Activated CD8-positive, alpha-beta T cell treated with anti-CD3 and anti-CD28 coated beads, Interleukin-2, amount 10 ng/mL, durations not matched to agents 7 days and 5 days (primary cell): ENCODE measurements at regions of chr6 and their contacts with region 1.

Region 1: GRCh38 chr6:30914076-30914853 is at the start of gene VARS2:
- DNase-seq: peak; percentile 87
- ATAC-seq: peak; percentile 97
- H3K4me3 Mint-ChIP-seq: peak within 1 kb of the TSS; percentile 86
- H3K27ac Mint-ChIP-seq: peak within 1 kb of the TSS; percentile 89
- H3K4me1 Mint-ChIP-seq: peaks cover 29% of the 10 kb centered on the region
- H3K27me3 Mint-ChIP-seq: no peaks in the 10 kb centered on the region
- total RNA-seq, gene VARS2: 38.4 to 38.8 TPM

Region 2: GRCh38 chr6:30821862-30822782 is 92.1 kb before region 1 on chr6:
- CTCF ChIA-PET with region 1: interaction called, 69 read pairs
- POLR2A ChIA-PET with region 1: no interaction called
- DNase-seq: no peak
- ATAC-seq: no peak
- H3K4me3 Mint-ChIP-seq: no peak overlapping the region
- H3K27ac Mint-ChIP-seq: peak overlapping the region; percentile 39
- H3K4me1 Mint-ChIP-seq: peaks cover 60% of the 10 kb centered on the region
- H3K27me3 Mint-ChIP-seq: no peaks in the 10 kb centered on the region

Region 3: DNA sequence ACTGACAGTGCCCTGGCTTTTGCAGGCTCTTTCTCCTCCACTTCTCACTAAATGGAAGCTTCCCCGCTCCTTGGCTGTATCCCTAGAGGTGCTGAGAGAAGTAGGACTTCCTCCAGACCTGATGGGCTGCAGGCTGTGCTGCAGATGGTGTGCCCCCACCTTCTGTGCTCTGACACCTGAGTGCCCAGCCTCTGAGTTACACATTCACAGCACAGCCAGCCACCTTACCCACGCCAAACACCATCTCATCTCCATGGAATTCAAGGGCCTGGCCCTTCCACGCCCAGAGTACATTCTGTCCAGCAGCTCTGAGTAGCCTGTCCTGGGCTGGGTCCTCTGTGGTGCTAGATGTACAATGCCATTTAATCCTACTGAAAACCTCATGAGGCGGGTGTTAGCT is 12.4 kb after region 1 on chr6:
- CTCF ChIA-PET with region 1: interaction called, 11 read pairs
- POLR2A ChIA-PET with region 1: no interaction called
- DNase-seq: no peak
- ATAC-seq: no peak
- H3K4me3 Mint-ChIP-seq: no peak overlapping the region
- H3K27ac Mint-ChIP-seq: no peak overlapping the region
- H3K4me1 Mint-ChIP-seq: no peaks in the 10 kb centered on the region
- H3K27me3 Mint-ChIP-seq: no peaks in the 10 kb centered on the region

Region 4: DNA sequence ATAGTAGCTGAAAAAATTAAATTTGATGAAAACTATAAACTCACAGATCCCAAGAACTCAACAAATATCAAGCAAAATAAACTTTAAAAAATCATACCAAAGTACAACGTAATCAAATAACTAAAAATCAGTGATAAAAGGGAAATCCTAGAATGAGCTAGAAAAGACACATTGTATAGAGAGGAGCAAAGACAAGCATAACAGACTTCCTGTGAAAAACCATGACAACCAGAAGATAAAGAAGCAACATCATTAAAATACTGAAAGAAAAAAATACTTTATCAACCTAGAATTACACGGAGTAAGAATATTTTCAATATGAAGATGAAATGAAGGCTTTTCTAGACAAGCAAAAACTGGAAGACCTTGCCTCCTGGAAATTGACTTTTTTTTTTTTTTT is 105.8 kb after region 1 on chr6:
- CTCF ChIA-PET with region 1: no interaction called
- POLR2A ChIA-PET with region 1: no interaction called
- DNase-seq: no peak
- ATAC-seq: no peak
- H3K4me3 Mint-ChIP-seq: no peak overlapping the region
- H3K27ac Mint-ChIP-seq: no peak overlapping the region
- H3K4me1 Mint-ChIP-seq: no peaks in the 10 kb centered on the region
- H3K27me3 Mint-ChIP-seq: peaks cover 14% of the 10 kb centered on the region

Region 5: GRCh38 chr6:31068669-31069340 is 154.5 kb after region 1 on chr6:
- CTCF ChIA-PET with region 1: interaction called, 56 read pairs
- POLR2A ChIA-PET with region 1: no interaction called
- DNase-seq: peak; percentile 68
- ATAC-seq: peak; percentile 94
- H3K4me3 Mint-ChIP-seq: no peak overlapping the region
- H3K27ac Mint-ChIP-seq: no peak overlapping the region
- H3K4me1 Mint-ChIP-seq: no peaks in the 10 kb centered on the region
- H3K27me3 Mint-ChIP-seq: peaks cover 9% of the 10 kb centered on the region

Region 6: DNA sequence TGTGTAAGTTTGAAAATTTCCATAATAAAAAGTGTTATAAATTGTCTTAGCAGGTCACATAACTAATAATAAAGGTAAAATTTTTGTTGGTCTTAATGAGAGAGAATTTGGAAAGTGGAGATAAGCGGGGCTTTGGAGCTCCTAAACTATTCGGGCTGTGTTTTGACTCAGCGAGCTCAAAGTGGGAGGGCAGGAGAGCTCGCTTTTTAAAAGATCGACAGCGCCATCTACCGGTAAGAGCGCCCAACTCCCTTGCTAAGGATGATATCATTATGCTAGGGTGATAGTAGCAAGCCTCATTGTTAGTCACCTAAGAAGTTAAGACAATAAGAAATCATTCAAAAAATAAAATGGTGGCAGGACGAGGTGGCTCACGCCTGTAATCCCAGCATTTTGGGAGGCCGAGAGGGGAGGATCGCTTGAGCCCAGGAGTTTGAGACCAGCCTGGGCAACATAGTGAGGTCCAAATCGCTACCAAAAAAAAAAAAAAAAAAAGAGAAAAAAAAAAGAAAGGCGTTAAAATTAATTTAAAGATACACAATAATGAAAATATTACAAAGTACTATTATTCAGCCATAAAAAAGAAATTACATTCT is 173.3 kb after region 1 on chr6:
- CTCF ChIA-PET with region 1: interaction called, 97 read pairs
- POLR2A ChIA-PET with region 1: no interaction called
- DNase-seq: peak; percentile 91
- ATAC-seq: peak; percentile 90
- H3K4me3 Mint-ChIP-seq: no peak overlapping the region
- H3K27ac Mint-ChIP-seq: no peak overlapping the region
- H3K4me1 Mint-ChIP-seq: peaks cover 9% of the 10 kb centered on the region
- H3K27me3 Mint-ChIP-seq: peaks cover 14% of the 10 kb centered on the region